Left cardiac atrium (tissue), 4 donors: ENCODE measurements at regions of chr15 and their contacts with region 1.

Region 1: GRCh38 chr15:58182460-58183163 is 44.4 kb downstream of the AQP9 start:
- DNase-seq: peak; percentile 55
- ATAC-seq: peak; percentile 91 to 92

Region 2: DNA sequence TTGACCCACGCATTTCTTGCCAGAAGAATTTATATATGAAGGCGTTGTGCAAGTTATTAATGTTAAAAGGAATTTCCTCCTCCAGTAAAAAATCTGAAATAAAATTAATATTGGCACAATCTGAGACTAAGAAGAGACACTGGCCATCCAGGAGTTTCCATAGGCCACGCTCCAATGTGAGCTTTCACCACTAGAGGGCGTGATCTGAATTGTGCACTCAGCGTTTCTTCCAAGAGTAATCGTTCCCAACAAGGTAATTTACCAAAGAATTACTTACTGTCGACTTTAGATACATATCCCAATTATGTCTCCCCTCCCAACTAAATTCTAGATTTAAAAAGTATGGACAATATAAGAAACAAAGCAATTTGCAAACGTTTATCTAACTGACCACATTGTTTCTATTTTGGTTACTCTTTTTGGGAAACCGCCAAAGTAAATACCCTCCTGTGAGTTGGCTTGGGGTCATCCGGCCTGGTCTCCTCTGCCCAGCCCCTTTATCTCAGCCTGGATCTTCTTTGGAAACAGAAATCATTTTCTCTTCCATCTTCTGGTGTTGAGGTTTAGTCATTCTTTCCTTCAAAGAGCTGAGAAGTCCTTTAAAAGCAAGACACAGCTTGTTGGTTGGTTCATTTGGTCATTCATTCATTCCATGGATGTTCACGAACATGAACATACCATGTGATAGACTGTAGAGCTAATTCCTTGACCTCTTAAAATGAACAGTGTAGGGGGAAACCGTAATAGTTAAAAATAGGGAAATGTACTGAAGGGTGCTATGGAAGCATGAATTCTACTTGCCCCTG is 449.9 kb before region 1 on chr15:
- intact Hi-C with region 1: loop called in 1 of 2 experiments (anchors 5 kb)
- DNase-seq: peak; percentile 53
- ATAC-seq: peak; percentile 68 to 69

Region 3: DNA sequence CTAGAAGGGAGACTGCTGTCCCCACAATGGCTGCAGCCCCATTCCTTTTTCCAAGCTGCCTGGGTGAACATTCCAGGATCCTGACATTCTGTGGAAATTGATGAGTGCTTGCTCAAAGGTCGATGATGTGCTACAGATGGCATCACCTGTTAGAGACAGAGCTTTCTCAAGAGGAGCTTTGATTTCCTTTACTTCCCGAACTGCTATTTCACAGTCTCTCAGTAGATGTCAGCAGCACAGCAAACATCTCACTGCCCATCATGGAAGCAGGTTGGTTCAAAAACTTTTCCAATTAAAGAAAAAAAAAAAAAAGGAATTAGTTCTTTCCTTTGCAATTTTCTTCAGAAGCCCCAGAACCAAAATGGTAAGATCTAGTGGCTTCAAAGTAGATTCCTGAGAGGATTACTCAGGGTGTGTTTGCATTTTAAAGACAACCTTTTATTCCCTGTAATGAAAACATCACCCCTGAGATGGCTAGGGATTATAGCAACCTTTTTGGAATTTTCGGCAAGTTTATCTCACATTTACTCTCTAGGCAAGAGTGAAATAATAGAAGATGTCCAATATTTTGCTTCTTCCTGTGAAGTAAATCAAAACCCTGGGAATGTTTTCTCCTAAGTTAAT is 431.3 kb before region 1 on chr15:
- intact Hi-C with region 1: loop called in 1 of 2 experiments (anchors 5 kb)
- DNase-seq: no peak
- ATAC-seq: peak; percentile 49 to 65

Region 4: GRCh38 chr15:57866149-57866736 is 316.4 kb before region 1 on chr15:
- intact Hi-C with region 1: loop called in 1 of 2 experiments (anchors 10 kb)
- DNase-seq: peak; percentile 68
- ATAC-seq: peak; percentile 55 to 65

Region 5: GRCh38 chr15:58077427-58077826 is 105.2 kb before region 1 on chr15:
- intact Hi-C with region 1: loop called in 1 of 2 experiments (anchors 5 kb)
- DNase-seq: no peak
- ATAC-seq: peak in 1 of 2 donors; percentile 32

Region 6: GRCh38 chr15:58115692-58116091 is 66.9 kb before region 1 on chr15:
- intact Hi-C with region 1: loop called in 1 of 2 experiments (anchors 10 kb)
- DNase-seq: no peak
- ATAC-seq: peak in 1 of 2 donors; percentile 60